Natural killer cell (primary cell): ENCODE measurements at regions of chr6 and their contacts with region 1.

Region 1: DNA sequence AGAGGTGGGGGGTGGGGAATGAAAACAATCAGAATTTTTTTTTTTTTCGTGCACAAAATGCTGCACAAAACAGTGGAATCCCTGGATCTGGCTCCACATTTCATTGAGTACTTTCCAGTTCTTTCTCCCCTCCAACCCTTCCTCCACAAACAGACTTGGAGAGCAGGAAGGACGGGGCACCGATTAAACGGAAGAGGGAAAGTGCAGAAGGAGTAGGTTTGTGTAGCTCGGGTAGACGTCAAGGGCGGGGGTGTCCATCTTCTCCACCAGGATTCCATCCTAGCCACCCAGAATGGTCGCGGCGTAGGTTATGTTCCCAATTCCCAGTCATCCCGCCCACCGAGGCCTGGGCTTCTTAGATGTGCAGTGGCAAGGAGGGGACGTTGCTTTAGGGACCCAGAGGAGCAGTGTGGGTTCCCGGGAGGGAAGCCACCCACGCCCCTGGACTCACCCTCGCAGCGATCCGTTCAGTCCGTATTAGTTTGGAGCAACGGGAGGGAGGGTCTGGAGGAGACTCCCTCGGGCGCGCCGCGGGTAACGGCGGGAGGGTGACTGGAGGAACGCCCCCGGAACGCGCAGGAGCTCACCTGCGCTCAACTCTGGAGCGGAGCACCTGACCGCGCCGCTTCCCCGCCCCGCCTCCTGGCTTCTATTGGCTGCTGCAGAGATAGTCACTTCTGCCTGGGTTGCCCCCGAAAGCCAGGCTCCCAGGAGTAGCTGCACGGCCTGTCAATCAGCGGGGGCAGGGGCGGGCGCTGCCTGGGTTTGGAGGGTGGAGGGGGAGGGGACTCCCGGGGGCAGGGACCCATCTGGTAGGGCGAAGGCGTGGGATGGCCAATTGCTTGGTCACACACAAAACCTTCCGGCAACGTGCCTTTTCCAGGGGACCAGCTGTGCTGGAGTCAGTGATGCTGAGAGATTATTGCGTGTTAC is at the start of gene ENPP5:
- DNase-seq: peak; percentile 76 to 84
- ATAC-seq: peak; percentile 83 to 86 (median 85)
- H3K4me3 ChIP-seq: peak within 1 kb of the TSS; percentile 80
- H3K4me3 Mint-ChIP-seq: peak within 1 kb of the TSS; percentile 91
- H3K27ac ChIP-seq: peak within 1 kb of the TSS; percentile 60
- H3K27ac Mint-ChIP-seq: peak within 1 kb of the TSS; percentile 90 to 99
- H3K4me1 ChIP-seq: peaks cover 30% of the 10 kb centered on the region
- H3K4me1 Mint-ChIP-seq: peaks cover 77 to 78% of the 10 kb centered on the region in 2 donors
- H3K27me3 ChIP-seq: no peaks in the 10 kb centered on the region
- H3K27me3 Mint-ChIP-seq: no peaks in the 10 kb centered on the region
- CTCF ChIP-seq: no peak
- total RNA-seq, gene ENPP5: 9.3 to 13.4 (median 9.6) TPM

Region 2: DNA sequence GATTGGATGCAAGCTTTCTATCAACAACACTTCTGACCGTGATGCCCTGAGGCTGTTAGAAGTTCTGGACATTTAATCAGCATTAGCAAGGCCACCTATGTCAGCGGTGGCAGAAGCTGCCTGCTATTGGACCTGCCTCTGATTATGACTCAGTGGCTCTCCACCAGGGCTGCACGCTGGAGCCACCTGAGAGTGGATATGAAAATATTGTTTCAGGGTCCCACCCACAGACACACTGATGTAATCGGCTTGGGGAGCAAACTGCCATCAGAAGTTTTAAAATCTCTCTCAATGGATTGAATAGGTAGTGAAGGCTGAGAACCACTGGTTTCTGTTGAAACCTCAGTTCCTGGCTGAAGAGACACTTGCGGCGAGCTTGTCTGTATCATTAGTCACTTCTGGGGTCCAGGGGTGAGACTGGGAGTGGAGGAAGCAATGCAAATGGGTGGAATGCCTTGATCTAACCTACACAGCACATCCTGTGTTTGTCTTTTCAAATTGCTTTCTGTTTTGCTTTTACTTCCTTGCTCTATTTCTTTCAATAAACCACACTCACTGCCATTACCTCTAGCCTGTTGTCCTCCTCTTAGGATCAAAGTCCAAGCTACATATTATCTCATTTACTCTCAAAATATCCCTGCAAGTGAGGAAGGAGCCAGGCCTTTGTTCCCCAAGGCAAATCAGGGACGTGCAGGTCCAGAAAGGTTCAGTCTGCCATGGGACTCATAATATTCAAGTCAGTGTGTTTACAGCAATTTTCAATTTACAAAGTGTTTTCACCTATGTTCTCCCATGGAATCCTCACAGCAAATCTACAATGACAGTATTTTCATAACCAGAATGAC is 159.2 kb before region 1 on chr6:
- intact Hi-C with region 1: loop called (anchors 5 kb)
- DNase-seq: peak; percentile 32 to 85
- ATAC-seq: peak; percentile 82 to 88 (median 88)
- H3K4me3 ChIP-seq: no peak overlapping the region
- H3K4me3 Mint-ChIP-seq: peak overlapping the region; percentile 75
- H3K27ac ChIP-seq: peak overlapping the region; percentile 73
- H3K27ac Mint-ChIP-seq: peak overlapping the region; percentile 82 to 85
- H3K4me1 ChIP-seq: peaks cover 50% of the 10 kb centered on the region
- H3K4me1 Mint-ChIP-seq: peaks cover 44 to 56% of the 10 kb centered on the region in 2 donors
- H3K27me3 ChIP-seq: peaks cover 7% of the 10 kb centered on the region
- H3K27me3 Mint-ChIP-seq: peaks cover 15 to 19% of the 10 kb centered on the region in 2 donors
- CTCF ChIP-seq: no peak

Region 3: DNA sequence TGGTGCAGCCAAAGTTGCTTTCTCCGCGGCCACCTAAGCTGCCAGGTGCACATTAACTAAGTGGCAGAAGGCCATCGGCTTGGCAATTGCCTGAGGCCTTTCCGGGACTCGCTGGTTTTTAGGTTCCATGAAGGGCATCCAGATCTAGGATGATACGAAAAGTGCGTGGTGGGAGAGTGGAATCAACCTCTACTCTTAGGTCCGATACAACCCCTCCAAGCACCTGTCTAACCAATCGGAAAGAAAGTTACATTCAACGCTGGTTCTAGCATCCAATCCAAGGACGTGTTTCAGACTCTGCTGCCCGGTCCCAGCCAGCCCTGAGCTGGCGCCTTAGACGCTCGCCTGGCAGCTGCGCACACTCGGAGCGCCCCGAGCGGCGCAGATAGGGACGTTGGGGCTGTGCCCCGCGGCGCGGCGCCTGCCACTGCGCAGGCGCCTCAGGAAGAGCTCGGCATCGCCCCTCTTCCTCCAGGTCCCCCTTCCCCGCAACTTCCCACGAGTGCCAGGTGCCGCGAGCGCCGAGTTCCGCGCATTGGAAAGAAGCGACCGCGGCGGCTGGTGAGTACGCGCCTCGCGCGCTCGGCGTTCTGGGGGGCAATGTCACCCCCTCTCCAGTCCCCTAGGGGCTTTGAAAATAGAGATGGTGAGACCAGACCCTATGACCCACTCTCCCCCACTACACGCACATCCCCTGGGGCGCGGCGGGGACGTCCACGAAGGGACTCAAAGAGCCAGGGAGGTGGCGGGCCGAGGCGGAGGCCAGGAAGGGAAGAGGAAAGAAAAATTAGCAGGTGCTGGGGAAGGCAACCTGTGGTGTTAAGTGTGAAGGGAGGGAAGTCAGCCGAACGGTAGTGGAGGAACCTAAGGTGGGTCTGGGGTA is 40.8 kb before region 1 on chr6 and contains the start of gene ENPP4:
- intact Hi-C with region 1: loop called (anchors 1 kb)
- DNase-seq: peak; percentile 82 to 96
- ATAC-seq: peak; percentile 97 to 100 (median 97)
- H3K4me3 ChIP-seq: peak within 1 kb of the TSS; percentile 84
- H3K4me3 Mint-ChIP-seq: peak within 1 kb of the TSS; percentile 97
- H3K27ac ChIP-seq: peak within 1 kb of the TSS; percentile 83
- H3K27ac Mint-ChIP-seq: peak within 1 kb of the TSS; percentile 89 to 99
- H3K4me1 ChIP-seq: peaks cover 18% of the 10 kb centered on the region
- H3K4me1 Mint-ChIP-seq: peaks cover 52 to 61% of the 10 kb centered on the region in 2 donors
- H3K27me3 ChIP-seq: no peaks in the 10 kb centered on the region
- H3K27me3 Mint-ChIP-seq: no peaks in the 10 kb centered on the region
- CTCF ChIP-seq: no peak
- total RNA-seq, gene ENPP4: 25.0 to 45.0 (median 26.6) TPM

Region 4: GRCh38 chr6:46626228-46626909 is 455.7 kb after region 1 on chr6:
- intact Hi-C with region 1: no loop called
- DNase-seq: peak in 1 of 2 donors; percentile 23
- ATAC-seq: no peak
- H3K4me3 ChIP-seq: no peak overlapping the region
- H3K4me3 Mint-ChIP-seq: no peak overlapping the region
- H3K27ac ChIP-seq: no peak overlapping the region
- H3K27ac Mint-ChIP-seq: no peak overlapping the region
- H3K4me1 ChIP-seq: no peaks in the 10 kb centered on the region
- H3K4me1 Mint-ChIP-seq: no peaks in the 10 kb centered on the region
- H3K27me3 ChIP-seq: no peaks in the 10 kb centered on the region
- H3K27me3 Mint-ChIP-seq: peaks cover 21 to 26% of the 10 kb centered on the region in 2 donors
- CTCF ChIP-seq: peak; percentile 51